CD8-positive, alpha-beta memory T cell (primary cell): ENCODE measurements at regions of chr1 and their contacts with region 1.

Region 1: DNA sequence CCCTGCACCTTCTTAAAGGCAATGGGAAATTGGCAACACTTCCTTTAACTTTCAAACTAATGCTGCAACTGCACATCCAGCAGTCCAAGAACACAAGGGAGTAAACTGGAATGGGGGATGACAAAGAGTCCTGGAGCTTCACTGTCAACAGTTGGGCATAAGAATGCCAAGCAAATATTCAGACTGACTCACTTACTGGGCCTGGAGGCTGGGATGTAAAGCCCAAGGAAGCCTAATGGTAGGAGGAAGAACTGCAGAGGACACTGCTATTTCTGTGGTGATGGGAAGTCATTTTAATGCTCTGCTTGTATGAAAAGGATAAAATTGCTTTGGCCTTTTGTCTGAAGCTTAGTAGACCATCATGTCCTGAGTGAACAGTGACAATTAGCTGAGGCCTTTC is 15.7 kb upstream of the DMRTA2 start:
- DNase-seq: no peak
- H3K4me3 ChIP-seq: no peak overlapping the region
- H3K4me3 Mint-ChIP-seq: no peak overlapping the region
- H3K27ac ChIP-seq: no peak overlapping the region
- H3K27ac Mint-ChIP-seq: no peak overlapping the region
- H3K4me1 ChIP-seq: no peaks in the 10 kb centered on the region
- H3K4me1 Mint-ChIP-seq: peaks cover 0 to 2% (median 0%) of the 10 kb centered on the region in 3 donors
- H3K27me3 ChIP-seq: no peaks in the 10 kb centered on the region
- H3K27me3 Mint-ChIP-seq: no peaks in the 10 kb centered on the region

Region 2: DNA sequence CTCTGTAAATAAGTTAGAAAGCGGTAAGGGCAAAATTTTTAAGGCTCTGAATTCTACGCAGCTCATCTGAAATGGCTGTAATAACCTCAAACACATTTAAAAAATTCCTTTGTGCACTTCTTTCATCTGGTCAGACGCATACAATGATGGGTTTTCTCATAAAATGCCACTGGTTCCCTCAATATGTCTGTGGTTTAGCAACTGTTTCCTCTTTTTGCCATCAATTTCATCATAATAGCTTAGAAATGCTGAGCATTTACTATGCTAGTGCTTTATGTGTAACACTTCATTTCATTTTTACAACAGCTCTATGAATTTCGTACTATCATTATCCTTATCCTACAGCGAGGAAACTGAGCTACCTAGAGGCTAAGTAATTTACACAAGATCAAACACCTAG is 19.6 kb after region 1 on chr1:
- CTCF ChIA-PET with region 1: no interaction called
- POLR2A ChIA-PET with region 1: no interaction called
- DNase-seq: no peak
- H3K4me3 ChIP-seq: no peak overlapping the region
- H3K4me3 Mint-ChIP-seq: no peak overlapping the region
- H3K27ac ChIP-seq: no peak overlapping the region
- H3K27ac Mint-ChIP-seq: peak overlapping the region in 1 of 8 donors; percentile 54
- H3K4me1 ChIP-seq: no peaks in the 10 kb centered on the region
- H3K4me1 Mint-ChIP-seq: peaks cover 4 to 11% (median 5%) of the 10 kb centered on the region in 3 donors
- H3K27me3 ChIP-seq: no peaks in the 10 kb centered on the region
- H3K27me3 Mint-ChIP-seq: no peaks in the 10 kb centered on the region

Region 3: GRCh38 chr1:50620680-50621329 is 181.9 kb after region 1 on chr1:
- CTCF ChIA-PET with region 1: no interaction called
- POLR2A ChIA-PET with region 1: interaction called, 12 read pairs
- DNase-seq: no peak
- H3K4me3 ChIP-seq: no peak overlapping the region
- H3K4me3 Mint-ChIP-seq: no peak overlapping the region
- H3K27ac ChIP-seq: no peak overlapping the region
- H3K27ac Mint-ChIP-seq: no peak overlapping the region
- H3K4me1 ChIP-seq: no peaks in the 10 kb centered on the region
- H3K4me1 Mint-ChIP-seq: no peaks in the 10 kb centered on the region
- H3K27me3 ChIP-seq: no peaks in the 10 kb centered on the region
- H3K27me3 Mint-ChIP-seq: no peaks in the 10 kb centered on the region